ENCODE measurements at regions of chr15 and their contacts with region 1.

Region 1: GRCh38 chr15:60326824-60327654 is 70.7 kb downstream of the ANXA2 start:
- DNase-seq: peak; percentile 29
- H3K4me3 ChIP-seq: no peak overlapping the region
- H3K27ac ChIP-seq: no peak overlapping the region
- H3K4me1 ChIP-seq: no peaks in the 10 kb centered on the region
- H3K27me3 ChIP-seq: peaks cover 12% of the 10 kb centered on the region
- CTCF ChIP-seq: peak; percentile 68

Region 2: DNA sequence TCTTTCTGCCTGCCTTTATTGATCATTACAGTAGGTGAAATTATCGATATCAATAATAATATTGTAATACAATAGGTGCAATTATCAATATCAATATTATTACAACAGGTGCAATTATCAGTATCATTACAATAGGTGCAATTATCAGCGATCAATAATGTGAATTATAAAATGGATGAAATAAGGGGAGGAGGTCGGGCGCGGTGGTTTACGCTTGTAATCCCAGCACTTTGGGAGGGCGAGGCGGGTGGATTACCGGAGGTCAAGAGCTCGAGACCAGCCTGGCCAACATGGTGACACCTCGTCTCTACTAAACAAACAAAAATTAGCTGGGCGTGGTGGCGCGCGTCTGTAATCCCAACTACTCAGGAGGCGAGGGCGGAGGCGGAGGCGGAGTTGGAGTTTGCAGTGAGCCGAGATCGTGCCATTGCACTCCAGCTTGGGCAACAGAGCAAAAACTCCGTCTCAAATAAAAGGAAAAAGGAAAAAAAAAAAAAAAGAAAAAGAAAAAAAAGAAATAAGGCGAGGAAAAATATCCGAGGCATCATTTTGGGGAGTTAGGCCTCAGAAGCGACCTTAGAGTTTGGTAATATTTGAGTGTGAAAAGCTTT is 637.3 kb before region 1 on chr15:
- intact Hi-C with region 1: loop called (anchors 10 kb)
- DNase-seq: peak; percentile 94
- H3K4me3 ChIP-seq: peak overlapping the region; percentile 78
- H3K27ac ChIP-seq: peak overlapping the region; percentile 100
- H3K4me1 ChIP-seq: peaks cover 8% of the 10 kb centered on the region
- H3K27me3 ChIP-seq: no peaks in the 10 kb centered on the region
- CTCF ChIP-seq: no peak

Region 3: GRCh38 chr15:59725172-59725486 is 601.9 kb before region 1 on chr15:
- intact Hi-C with region 1: loop called (anchors 5 kb)
- DNase-seq: no peak
- H3K4me3 ChIP-seq: no peak overlapping the region
- H3K27ac ChIP-seq: no peak overlapping the region
- H3K4me1 ChIP-seq: no peaks in the 10 kb centered on the region
- H3K27me3 ChIP-seq: no peaks in the 10 kb centered on the region
- CTCF ChIP-seq: no peak

Region 4: GRCh38 chr15:60444289-60444912 is 117.4 kb after region 1 on chr15:
- intact Hi-C with region 1: loop called (anchors 2 kb)
- DNase-seq: no peak
- H3K4me3 ChIP-seq: no peak overlapping the region
- H3K27ac ChIP-seq: no peak overlapping the region
- H3K4me1 ChIP-seq: no peaks in the 10 kb centered on the region
- H3K27me3 ChIP-seq: no peaks in the 10 kb centered on the region
- CTCF ChIP-seq: peak; percentile 41

Region 5: GRCh38 chr15:60520825-60521368 is 193.9 kb after region 1 on chr15:
- intact Hi-C with region 1: loop called (anchors 10 kb)
- DNase-seq: peak; percentile 78
- H3K4me3 ChIP-seq: no peak overlapping the region
- H3K27ac ChIP-seq: no peak overlapping the region
- H3K4me1 ChIP-seq: no peaks in the 10 kb centered on the region
- H3K27me3 ChIP-seq: no peaks in the 10 kb centered on the region
- CTCF ChIP-seq: peak; percentile 88